Vagina (tissue), 2 donors: ENCODE measurements at regions of chr1 and their contacts with region 1.

Region 1: GRCh38 chr1:21189906-21190500 is 13.3 kb upstream of the EIF4G3 start:
- DNase-seq: no peak
- H3K4me3 ChIP-seq: no peak overlapping the region
- H3K27ac ChIP-seq: no peak overlapping the region
- H3K4me1 ChIP-seq: no peaks in the 10 kb centered on the region
- H3K27me3 ChIP-seq: no peaks in the 10 kb centered on the region
- CTCF ChIP-seq: no peak
- POLR2A ChIP-seq: no peak

Region 2: DNA sequence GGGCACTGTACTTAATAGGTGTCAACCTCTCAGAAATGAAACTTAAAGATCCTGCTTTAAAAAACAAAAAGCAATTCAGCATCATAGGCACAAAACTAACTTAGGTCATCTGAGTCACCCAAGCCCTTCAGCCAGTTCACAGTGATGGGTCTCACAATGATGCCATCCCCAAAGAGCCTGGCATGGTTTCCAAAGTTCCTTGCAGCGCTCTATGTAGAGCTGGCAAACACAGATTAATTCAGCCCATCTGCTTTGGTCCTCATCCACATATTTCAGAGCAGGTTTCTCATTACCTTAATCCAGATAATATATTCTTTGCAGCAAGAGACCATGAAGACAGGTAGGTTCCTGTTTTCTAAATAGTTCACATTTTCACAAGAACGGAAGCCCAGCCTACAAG is 989.0 kb before region 1 on chr1:
- intact Hi-C with region 1: loop called (anchors 5 kb)
- DNase-seq: no peak
- H3K4me3 ChIP-seq: no peak overlapping the region
- H3K27ac ChIP-seq: no peak overlapping the region
- H3K4me1 ChIP-seq: no peaks in the 10 kb centered on the region
- H3K27me3 ChIP-seq: no peaks in the 10 kb centered on the region
- CTCF ChIP-seq: no peak
- POLR2A ChIP-seq: no peak

Region 3: GRCh38 chr1:20981915-20982314 is 208.1 kb before region 1 on chr1:
- intact Hi-C with region 1: loop called (anchors 10 kb)
- DNase-seq: no peak
- H3K4me3 ChIP-seq: no peak overlapping the region
- H3K27ac ChIP-seq: peak overlapping the region; percentile 21
- H3K4me1 ChIP-seq: peaks cover 14% of the 10 kb centered on the region
- H3K27me3 ChIP-seq: no peaks in the 10 kb centered on the region
- CTCF ChIP-seq: no peak
- POLR2A ChIP-seq: no peak

Region 4: DNA sequence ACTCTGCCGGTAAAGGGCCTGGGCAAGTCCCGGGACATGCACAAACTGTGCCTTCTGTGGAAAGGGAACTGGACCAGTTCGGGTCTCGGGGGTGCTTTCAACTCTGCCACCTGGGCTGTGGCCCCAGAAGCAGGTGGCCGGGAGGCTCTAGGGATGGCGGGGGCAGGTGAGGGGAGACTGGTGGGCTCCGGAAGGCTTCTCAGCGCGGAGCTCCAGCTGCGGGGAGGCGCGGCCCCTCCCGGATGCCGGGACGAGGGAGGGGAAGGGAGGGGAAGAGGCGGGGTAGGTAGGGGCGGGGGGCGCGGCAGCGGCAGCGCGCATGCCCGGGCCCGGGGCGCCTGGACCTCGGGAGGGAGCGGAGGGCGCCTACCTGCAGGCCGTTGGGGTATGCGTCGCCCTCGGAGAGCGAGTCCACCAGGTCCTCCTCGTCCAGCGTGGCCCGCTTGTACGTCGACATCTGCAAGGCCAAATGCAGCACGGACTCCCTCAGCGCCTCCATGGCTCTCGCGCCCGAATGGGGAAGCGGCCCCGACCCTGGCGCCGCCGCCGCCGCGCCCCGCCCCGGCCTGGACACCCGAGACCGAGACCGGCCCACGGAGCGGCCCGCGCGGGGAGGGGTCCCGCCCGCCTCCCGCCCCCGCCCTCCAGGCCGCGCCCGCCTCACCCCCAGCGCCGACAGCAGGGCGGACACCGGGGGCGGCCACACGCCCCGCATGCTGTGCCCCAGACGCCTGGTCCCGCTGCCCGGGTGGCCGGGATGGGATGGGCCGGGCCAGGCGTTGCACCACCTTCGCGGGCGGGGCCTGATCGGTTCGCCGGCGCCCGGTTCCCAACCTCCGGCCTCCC is 99.9 kb after region 1 on chr1 and contains the start of gene ECE1:
- intact Hi-C with region 1: no loop called
- DNase-seq: no peak
- H3K4me3 ChIP-seq: peak within 1 kb of the TSS; percentile 59 to 86
- H3K27ac ChIP-seq: peak within 1 kb of the TSS; percentile 87
- H3K4me1 ChIP-seq: peaks cover 64% of the 10 kb centered on the region
- H3K27me3 ChIP-seq: no peaks in the 10 kb centered on the region
- CTCF ChIP-seq: no peak
- POLR2A ChIP-seq: peak in 1 of 2 donors; percentile 22
- total RNA-seq, gene ECE1: 93.8 TPM